ENCODE measurements at regions of chr1 and their contacts with region 1.

Region 1: GRCh38 chr1:246450611-246451251 is 56.3 kb downstream of the SMYD3 start:
- DNase-seq: no peak
- ATAC-seq: no peak
- H3K4me3 ChIP-seq: no peak overlapping the region
- H3K27ac ChIP-seq: no peak overlapping the region
- H3K4me1 ChIP-seq: no peaks in the 10 kb centered on the region
- H3K27me3 ChIP-seq: no peaks in the 10 kb centered on the region

Region 2: GRCh38 chr1:246012341-246012740 is 438.4 kb before region 1 on chr1:
- intact Hi-C with region 1: loop called in 3 of 4 experiments (anchors 5 to 10 kb)
- DNase-seq: no peak
- ATAC-seq: no peak
- H3K4me3 ChIP-seq: no peak overlapping the region
- H3K27ac ChIP-seq: no peak overlapping the region
- H3K4me1 ChIP-seq: no peaks in the 10 kb centered on the region
- H3K27me3 ChIP-seq: no peaks in the 10 kb centered on the region

Region 3: GRCh38 chr1:246506674-246507481 is 56.1 kb after region 1 on chr1 and contains the start of gene SMYD3:
- intact Hi-C with region 1: no loop called
- DNase-seq: peak; percentile 83 to 93 (median 91)
- ATAC-seq: peak; percentile 98 to 99
- H3K4me3 ChIP-seq: peak within 1 kb of the TSS; percentile 83
- H3K27ac ChIP-seq: peak within 1 kb of the TSS; percentile 55
- H3K4me1 ChIP-seq: no peaks in the 10 kb centered on the region
- H3K27me3 ChIP-seq: no peaks in the 10 kb centered on the region
- total RNA-seq, gene SMYD3: 9.1 to 11.6 (median 10.0) TPM

Region 4: DNA sequence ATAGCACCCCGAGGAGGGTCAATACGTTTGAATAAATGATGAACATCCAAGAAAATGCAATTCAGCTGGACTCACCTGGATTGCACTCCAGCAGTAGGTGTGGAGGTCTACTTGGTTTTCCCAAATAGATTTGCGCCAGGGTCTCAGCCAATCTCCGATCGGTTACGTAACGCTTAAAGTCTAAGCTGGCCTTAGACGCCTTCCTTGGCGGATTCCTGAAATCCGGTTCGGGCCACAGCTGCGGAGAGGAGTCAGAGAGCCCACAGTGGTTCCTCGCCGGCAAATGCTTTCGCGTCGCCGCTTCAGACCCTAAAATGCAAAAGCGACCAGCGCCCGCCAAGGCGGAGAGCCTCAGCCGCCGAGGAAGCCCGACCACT is 115.0 kb after region 1 on chr1:
- intact Hi-C with region 1: no loop called
- DNase-seq: no peak
- ATAC-seq: peak in 1 of 2 donors; percentile 8
- H3K4me3 ChIP-seq: peak overlapping the region; percentile 76
- H3K27ac ChIP-seq: peak overlapping the region; percentile 32
- H3K4me1 ChIP-seq: no peaks in the 10 kb centered on the region
- H3K27me3 ChIP-seq: no peaks in the 10 kb centered on the region